ENCODE measurements at regions of chr1 and their contacts with region 1.

Region 1: GRCh38 chr1:162716123-162716522 is 74.4 kb upstream of the HSD17B7 start:
- DNase-seq: no peak
- H3K4me3 ChIP-seq: no peak overlapping the region
- H3K27ac ChIP-seq: no peak overlapping the region
- H3K4me1 ChIP-seq: no peaks in the 10 kb centered on the region
- H3K27me3 ChIP-seq: no peaks in the 10 kb centered on the region
- CTCF ChIP-seq: no peak
- POLR2A ChIP-seq: no peak

Region 2: GRCh38 chr1:162197615-162198421 is 518.3 kb before region 1 on chr1:
- intact Hi-C with region 1: loop called (anchors 5 kb)
- DNase-seq: no peak
- H3K4me3 ChIP-seq: no peak overlapping the region
- H3K27ac ChIP-seq: no peak overlapping the region
- H3K4me1 ChIP-seq: peaks cover 0 to 3% of the 10 kb centered on the region in 2 donors
- H3K27me3 ChIP-seq: no peaks in the 10 kb centered on the region
- CTCF ChIP-seq: no peak
- POLR2A ChIP-seq: no peak

Region 3: GRCh38 chr1:163106364-163106987 is 390.4 kb after region 1 on chr1:
- intact Hi-C with region 1: no loop called
- DNase-seq: no peak
- H3K4me3 ChIP-seq: no peak overlapping the region
- H3K27ac ChIP-seq: no peak overlapping the region
- H3K4me1 ChIP-seq: no peaks in the 10 kb centered on the region
- H3K27me3 ChIP-seq: no peaks in the 10 kb centered on the region
- CTCF ChIP-seq: no peak
- POLR2A ChIP-seq: no peak